Endothelial cell of umbilical vein (primary cell): ENCODE measurements at regions of chr19 and their contacts with region 1.

Region 1: GRCh38 chr19:3146677-3147100 is 10.9 kb downstream of the GNA15 start:
- DNase-seq: no peak
- H3K4me3 ChIP-seq: no peak overlapping the region
- H3K27ac ChIP-seq: no peak overlapping the region
- H3K4me1 ChIP-seq: peaks cover 13% of the 10 kb centered on the region
- H3K27me3 ChIP-seq: no peaks in the 10 kb centered on the region
- CTCF ChIP-seq: peak; percentile 83 to 94
- POLR2A ChIP-seq: no peak

Region 2: GRCh38 chr19:3132971-3133792 is 13.5 kb before region 1 on chr19:
- CTCF ChIA-PET with region 1: interaction called, 122 read pairs
- POLR2A ChIA-PET with region 1: interaction called, 5 read pairs
- dilution Hi-C with region 1: no loop called
- intact Hi-C with region 1: loop called (anchors 1 kb)
- DNase-seq: no peak
- H3K4me3 ChIP-seq: no peak overlapping the region
- H3K27ac ChIP-seq: no peak overlapping the region
- H3K4me1 ChIP-seq: peaks cover 4% of the 10 kb centered on the region
- H3K27me3 ChIP-seq: no peaks in the 10 kb centered on the region
- CTCF ChIP-seq: no peak
- POLR2A ChIP-seq: no peak